Transverse colon (tissue), 4 donors: ENCODE measurements at regions of chr6 and their contacts with region 1.

Region 1: GRCh38 chr6:20401205-20402091 is at the start of gene E2F3:
- DNase-seq: peak; percentile 100
- H3K4me3 ChIP-seq: peak within 1 kb of the TSS; percentile 69 to 94 (median 76)
- H3K27ac ChIP-seq: peak within 1 kb of the TSS; percentile 87 to 98 (median 89)
- H3K4me1 ChIP-seq: peaks cover 0 to 18% (median 6%) of the 10 kb centered on the region in 4 donors
- H3K27me3 ChIP-seq: no peaks in the 10 kb centered on the region
- CTCF ChIP-seq: no peak
- EP300 ChIP-seq: no peak
- POLR2A ChIP-seq: peak; percentile 44
- total RNA-seq, gene E2F3: 2.2 to 16.3 (median 5.6) TPM

Region 2: DNA sequence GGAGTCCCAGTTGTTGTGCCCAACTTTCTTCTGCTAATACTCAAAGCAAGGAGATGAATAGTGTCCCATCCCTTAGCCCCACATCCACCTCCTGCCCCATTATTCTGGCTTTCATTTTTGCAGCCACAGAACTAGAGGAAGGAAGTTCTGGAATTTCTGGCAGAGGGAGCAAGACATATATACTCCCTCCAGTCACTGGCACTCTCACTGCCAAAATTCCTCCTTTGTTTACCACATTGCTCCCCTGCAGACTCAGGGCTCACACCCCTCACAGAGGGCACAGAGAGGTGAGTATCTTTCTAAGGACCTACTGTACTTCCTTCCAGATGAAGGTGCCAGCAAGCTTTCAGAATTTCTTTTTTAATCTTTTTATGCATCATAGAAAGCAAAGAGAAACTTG is 732.2 kb before region 1 on chr6:
- in situ Hi-C with region 1: no loop called
- intact Hi-C with region 1: no loop called
- DNase-seq: no peak
- H3K4me3 ChIP-seq: no peak overlapping the region
- H3K27ac ChIP-seq: no peak overlapping the region
- H3K4me1 ChIP-seq: no peaks in the 10 kb centered on the region
- H3K27me3 ChIP-seq: no peaks in the 10 kb centered on the region
- CTCF ChIP-seq: no peak
- EP300 ChIP-seq: no peak
- POLR2A ChIP-seq: no peak

Region 3: DNA sequence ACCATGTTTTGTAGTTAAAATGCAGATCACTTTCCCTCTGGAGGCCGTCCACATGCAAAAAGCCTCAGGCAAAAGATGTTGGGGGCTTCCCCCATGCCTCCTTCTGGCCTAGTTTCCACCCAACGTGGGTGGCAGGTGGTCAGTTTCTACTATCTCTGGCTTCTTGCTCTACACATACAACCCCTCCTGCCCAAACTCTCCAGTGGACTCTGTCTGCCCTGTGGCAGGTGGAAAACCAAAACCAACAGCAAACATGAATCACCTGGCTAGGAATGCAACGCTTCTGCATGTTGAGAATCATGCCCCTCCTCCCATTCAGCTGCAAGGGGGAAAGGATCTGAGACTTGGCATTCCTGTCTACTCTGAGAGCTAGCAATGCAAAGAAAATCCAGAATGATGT is 284.0 kb before region 1 on chr6:
- in situ Hi-C with region 1: no loop called
- intact Hi-C with region 1: loop called (anchors 10 kb)
- DNase-seq: no peak
- H3K4me3 ChIP-seq: no peak overlapping the region
- H3K27ac ChIP-seq: peak overlapping the region in 2 of 4 donors; percentile 65 to 76
- H3K4me1 ChIP-seq: peaks cover 0 to 11% (median 3%) of the 10 kb centered on the region in 4 donors
- H3K27me3 ChIP-seq: no peaks in the 10 kb centered on the region
- CTCF ChIP-seq: no peak
- EP300 ChIP-seq: no peak
- POLR2A ChIP-seq: no peak

Region 4: GRCh38 chr6:20291764-20292580 is 109.5 kb before region 1 on chr6:
- in situ Hi-C with region 1: loop called in 1 of 4 experiments (anchors 10 kb)
- intact Hi-C with region 1: no loop called
- DNase-seq: peak; percentile 87
- H3K4me3 ChIP-seq: no peak overlapping the region
- H3K27ac ChIP-seq: no peak overlapping the region
- H3K4me1 ChIP-seq: peaks cover 0 to 8% (median 2%) of the 10 kb centered on the region in 4 donors
- H3K27me3 ChIP-seq: no peaks in the 10 kb centered on the region
- CTCF ChIP-seq: peak; percentile 89 to 95 (median 91)
- EP300 ChIP-seq: no peak
- POLR2A ChIP-seq: no peak

Region 5: DNA sequence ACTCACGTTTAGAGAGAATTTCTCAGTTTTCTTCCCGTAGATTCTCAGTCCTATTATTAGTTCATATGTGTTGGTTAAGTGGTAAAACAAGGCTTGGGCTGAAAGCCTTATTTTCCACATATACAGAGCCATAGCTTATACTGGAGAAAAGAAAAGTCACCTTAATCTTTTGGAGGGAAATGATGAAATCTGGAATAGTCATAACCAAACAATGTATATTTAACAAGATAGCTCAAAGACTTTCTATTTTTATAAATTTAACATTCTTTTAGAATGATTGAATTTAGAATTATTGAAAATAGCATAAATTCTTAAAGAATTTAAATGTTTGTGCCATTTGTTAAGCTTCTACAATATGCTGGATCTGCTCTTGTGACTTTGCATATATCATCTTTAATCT is 218.6 kb after region 1 on chr6:
- in situ Hi-C with region 1: no loop called
- intact Hi-C with region 1: no loop called
- DNase-seq: no peak
- H3K4me3 ChIP-seq: no peak overlapping the region
- H3K27ac ChIP-seq: no peak overlapping the region
- H3K4me1 ChIP-seq: no peaks in the 10 kb centered on the region
- H3K27me3 ChIP-seq: no peaks in the 10 kb centered on the region
- CTCF ChIP-seq: no peak
- EP300 ChIP-seq: no peak
- POLR2A ChIP-seq: no peak